Activated T-helper 2 cell treated with anti-CD3 and anti-CD28 coated beads, Interferon-gamma antibody, Interleukin-2, Interleukin-4, amounts not matched to agents 10 μg/mL and 5 μg/mL and 100 μg/mL, durations not matched to agents 14 hours and 24 hours and 36 hours (primary cell): ENCODE measurements at regions of chr14 and their contacts with region 1.

Region 1: DNA sequence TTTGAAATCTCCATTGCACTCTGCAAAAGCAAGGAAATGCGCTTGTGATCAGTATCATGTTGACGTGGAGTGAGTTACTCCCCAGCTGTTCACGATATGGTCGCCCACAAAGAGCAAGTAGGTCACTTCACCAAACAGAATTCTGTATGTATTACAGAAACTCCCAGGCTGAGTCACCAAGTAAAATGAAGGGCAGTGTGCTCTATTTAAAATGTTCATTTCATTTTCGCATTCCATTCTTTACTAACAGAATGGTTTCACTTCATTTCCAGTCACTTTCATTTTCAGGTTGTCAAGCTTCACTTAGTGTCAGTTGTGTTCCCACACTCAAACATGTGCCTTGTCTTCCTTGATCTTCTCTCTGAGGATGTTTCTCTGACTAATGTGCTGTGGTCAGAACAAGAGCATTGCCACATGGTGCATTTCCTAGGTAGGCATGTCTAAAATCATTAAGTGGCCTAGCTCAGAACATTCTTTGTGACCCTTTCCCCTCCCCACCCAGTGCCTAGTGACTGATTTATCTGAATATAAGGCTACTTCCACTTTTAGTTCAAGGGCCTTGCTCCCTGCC is 391.2 kb downstream of the RAD51B start:
- DNase-seq: peak; percentile 54
- H3K4me3 Mint-ChIP-seq: peak overlapping the region; percentile 61
- H3K27ac Mint-ChIP-seq: peak overlapping the region; percentile 62
- H3K4me1 Mint-ChIP-seq: peaks cover 36% of the 10 kb centered on the region
- H3K27me3 Mint-ChIP-seq: no peaks in the 10 kb centered on the region

Region 2: DNA sequence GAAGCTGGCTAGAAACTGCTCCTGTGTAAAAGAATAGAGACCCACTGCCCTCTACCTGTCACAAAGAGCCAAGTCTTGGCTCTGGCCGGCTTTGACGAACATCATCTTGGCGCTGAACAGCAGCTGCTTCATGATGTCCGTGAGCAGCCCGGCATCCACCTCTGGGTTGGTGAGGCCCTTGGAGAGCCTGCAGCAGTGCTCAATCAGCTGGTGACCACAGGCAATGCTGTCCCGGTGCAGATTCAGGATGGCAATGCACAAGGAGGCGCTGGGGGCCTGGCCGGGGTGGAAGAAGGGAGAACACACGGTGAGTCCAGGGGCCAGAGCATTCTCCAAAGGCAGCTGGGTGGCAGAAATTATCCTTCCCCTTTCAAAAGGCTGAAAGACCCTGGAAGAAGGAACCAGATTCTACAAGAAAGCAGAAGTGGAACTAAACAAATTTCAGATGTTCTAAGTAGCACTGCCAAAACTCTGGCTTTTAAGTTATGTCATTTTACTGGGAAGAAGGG is 444.6 kb before region 1 on chr14:
- intact Hi-C with region 1: no loop called
- DNase-seq: no peak
- H3K4me3 Mint-ChIP-seq: no peak overlapping the region
- H3K27ac Mint-ChIP-seq: no peak overlapping the region
- H3K4me1 Mint-ChIP-seq: no peaks in the 10 kb centered on the region
- H3K27me3 Mint-ChIP-seq: no peaks in the 10 kb centered on the region

Region 3: DNA sequence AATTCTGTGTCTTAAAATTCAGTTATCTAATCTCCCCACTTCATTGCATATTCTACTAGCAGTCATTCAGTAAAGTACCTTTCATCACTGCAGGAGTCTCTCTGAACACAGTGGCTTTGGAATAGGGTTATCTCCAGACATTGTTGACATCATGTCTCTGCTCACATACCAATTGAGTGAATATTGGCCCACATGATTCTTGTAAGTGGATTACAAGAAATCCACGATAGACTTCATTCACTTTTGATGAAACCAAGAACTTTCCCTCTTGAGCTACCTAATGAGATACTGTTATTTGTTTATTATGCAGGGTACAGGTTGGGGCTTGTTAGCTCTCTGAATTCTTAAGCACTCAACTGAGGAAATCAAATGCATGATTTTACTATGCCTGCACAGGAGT is 106.3 kb before region 1 on chr14:
- intact Hi-C with region 1: no loop called
- DNase-seq: no peak
- H3K4me3 Mint-ChIP-seq: no peak overlapping the region
- H3K27ac Mint-ChIP-seq: no peak overlapping the region
- H3K4me1 Mint-ChIP-seq: peaks cover 5% of the 10 kb centered on the region
- H3K27me3 Mint-ChIP-seq: no peaks in the 10 kb centered on the region

Region 4: GRCh38 chr14:68181519-68182326 is 29.1 kb before region 1 on chr14:
- intact Hi-C with region 1: loop called (anchors 1 kb)
- DNase-seq: no peak
- H3K4me3 Mint-ChIP-seq: no peak overlapping the region
- H3K27ac Mint-ChIP-seq: peak overlapping the region; percentile 50
- H3K4me1 Mint-ChIP-seq: peaks cover 45% of the 10 kb centered on the region
- H3K27me3 Mint-ChIP-seq: no peaks in the 10 kb centered on the region

Region 5: GRCh38 chr14:68223631-68224030 is 12.8 kb after region 1 on chr14:
- intact Hi-C with region 1: no loop called
- DNase-seq: no peak
- H3K4me3 Mint-ChIP-seq: no peak overlapping the region
- H3K27ac Mint-ChIP-seq: no peak overlapping the region
- H3K4me1 Mint-ChIP-seq: peaks cover 14% of the 10 kb centered on the region
- H3K27me3 Mint-ChIP-seq: no peaks in the 10 kb centered on the region